Endothelial cell of umbilical vein (primary cell): ENCODE measurements at regions of chr13 and their contacts with region 1.

Region 1: DNA sequence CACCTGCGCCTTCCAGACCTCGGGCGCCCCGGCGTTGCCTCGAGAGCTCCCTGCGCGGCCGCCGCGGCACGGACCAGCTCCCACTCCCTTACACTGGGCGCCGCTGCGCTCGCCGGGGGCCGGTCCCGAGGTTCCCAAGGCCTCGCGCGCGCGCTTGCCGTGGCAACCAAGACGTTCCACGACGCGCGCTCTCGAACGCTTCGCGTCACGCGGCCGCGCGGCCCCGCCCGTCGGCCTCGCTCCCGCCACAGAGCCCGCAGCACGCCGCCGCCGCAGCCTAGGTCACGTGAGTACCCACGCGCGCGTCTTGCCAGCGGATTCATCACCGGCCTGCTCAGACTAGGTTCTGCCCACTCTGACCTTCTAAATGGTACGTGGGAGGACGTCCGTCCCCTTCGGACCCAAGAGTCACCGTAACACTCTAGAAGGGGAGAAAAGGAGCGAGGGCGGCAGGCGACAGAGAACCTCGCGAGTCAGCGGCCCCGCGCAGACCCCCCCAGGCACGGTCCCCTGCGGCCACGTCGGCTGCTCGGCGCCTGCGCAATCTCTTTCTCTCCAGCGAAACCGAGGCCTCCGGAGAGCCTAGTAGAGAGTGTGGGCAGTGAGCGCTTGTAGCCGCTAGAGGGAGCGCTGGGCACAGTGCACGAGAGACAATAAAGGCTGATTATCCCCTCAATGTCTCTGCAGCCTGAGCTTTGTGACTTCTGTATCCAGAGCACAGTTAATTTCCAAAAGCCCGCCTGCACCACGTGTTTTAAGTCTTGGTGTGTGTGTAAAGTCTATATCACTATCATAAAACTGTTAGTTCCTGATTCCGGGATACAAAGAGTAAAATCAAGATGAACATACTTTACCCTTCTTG is at the start of gene SPART:
- DNase-seq: peak; percentile 93
- H3K4me3 ChIP-seq: peak within 1 kb of the TSS; percentile 59 to 89 (median 85)
- H3K27ac ChIP-seq: peak within 1 kb of the TSS; percentile 85
- H3K4me1 ChIP-seq: peaks cover 14% of the 10 kb centered on the region
- H3K27me3 ChIP-seq: no peaks in the 10 kb centered on the region
- CTCF ChIP-seq: peak; percentile 97 to 99
- POLR2A ChIP-seq: no peak
- total RNA-seq, gene SPART: 73.6 and 74.1 TPM in 2 replicates

Region 2: GRCh38 chr13:36148446-36148845 is 198.0 kb before region 1 on chr13:
- CTCF ChIA-PET with region 1: no interaction called
- POLR2A ChIA-PET with region 1: no interaction called
- dilution Hi-C with region 1: no loop called
- intact Hi-C with region 1: loop called (anchors 5 kb)
- DNase-seq: no peak
- H3K4me3 ChIP-seq: no peak overlapping the region
- H3K27ac ChIP-seq: no peak overlapping the region
- H3K4me1 ChIP-seq: peaks cover 5% of the 10 kb centered on the region
- H3K27me3 ChIP-seq: peaks cover 0 to 2% of the 10 kb centered on the region in 2 experiments
- CTCF ChIP-seq: no peak
- POLR2A ChIP-seq: no peak

Region 3: GRCh38 chr13:36332986-36333385 is 13.5 kb before region 1 on chr13:
- CTCF ChIA-PET with region 1: interaction called, 13 read pairs
- POLR2A ChIA-PET with region 1: no interaction called
- dilution Hi-C with region 1: no loop called
- intact Hi-C with region 1: no loop called
- DNase-seq: peak; percentile 65
- H3K4me3 ChIP-seq: no peak overlapping the region
- H3K27ac ChIP-seq: peak overlapping the region; percentile 79
- H3K4me1 ChIP-seq: peaks cover 13% of the 10 kb centered on the region
- H3K27me3 ChIP-seq: no peaks in the 10 kb centered on the region
- CTCF ChIP-seq: no peak
- POLR2A ChIP-seq: no peak

Region 4: GRCh38 chr13:36420437-36420891 is 74.0 kb after region 1 on chr13:
- CTCF ChIA-PET with region 1: interaction called, 19 read pairs
- POLR2A ChIA-PET with region 1: no interaction called
- dilution Hi-C with region 1: no loop called
- intact Hi-C with region 1: loop called (anchors 1 kb)
- DNase-seq: peak; percentile 84
- H3K4me3 ChIP-seq: no peak overlapping the region
- H3K27ac ChIP-seq: no peak overlapping the region
- H3K4me1 ChIP-seq: peaks cover 32% of the 10 kb centered on the region
- H3K27me3 ChIP-seq: no peaks in the 10 kb centered on the region
- CTCF ChIP-seq: peak; percentile 86 to 91
- POLR2A ChIP-seq: no peak

Region 5: DNA sequence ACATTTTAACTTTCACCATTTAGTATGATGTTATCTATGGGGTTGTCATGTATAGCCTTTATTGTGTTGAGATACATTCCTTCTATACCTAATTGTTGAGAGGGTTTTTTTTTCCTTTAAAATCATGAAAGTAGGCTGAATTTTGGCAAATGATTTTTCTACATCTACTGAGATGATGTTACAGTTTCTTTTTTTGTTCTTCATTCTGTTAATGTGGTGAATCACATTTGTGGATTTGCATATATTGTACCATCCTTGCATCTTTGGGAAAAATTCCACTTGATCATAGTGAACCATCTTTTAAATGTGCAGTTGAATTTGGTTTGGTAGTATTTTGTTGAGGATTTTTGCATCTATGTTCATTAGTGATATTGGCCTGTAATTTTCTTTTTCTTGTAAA is 115.1 kb after region 1 on chr13:
- CTCF ChIA-PET with region 1: no interaction called
- POLR2A ChIA-PET with region 1: no interaction called
- dilution Hi-C with region 1: no loop called
- intact Hi-C with region 1: no loop called
- DNase-seq: no peak
- H3K4me3 ChIP-seq: no peak overlapping the region
- H3K27ac ChIP-seq: no peak overlapping the region
- H3K4me1 ChIP-seq: no peaks in the 10 kb centered on the region
- H3K27me3 ChIP-seq: peaks cover under 1 to 2% of the 10 kb centered on the region in 2 experiments
- CTCF ChIP-seq: no peak
- POLR2A ChIP-seq: no peak

Region 6: GRCh38 chr13:36818804-36819738 is 472.6 kb after region 1 on chr13 and contains the start of gene RFXAP:
- CTCF ChIA-PET with region 1: interaction called, 3 read pairs
- POLR2A ChIA-PET with region 1: no interaction called
- dilution Hi-C with region 1: no loop called
- intact Hi-C with region 1: loop called (anchors 2 kb)
- DNase-seq: peak; percentile 88
- H3K4me3 ChIP-seq: peak within 1 kb of the TSS; percentile 62 to 93 (median 83)
- H3K27ac ChIP-seq: peak within 1 kb of the TSS; percentile 44
- H3K4me1 ChIP-seq: peaks cover 35% of the 10 kb centered on the region
- H3K27me3 ChIP-seq: no peaks in the 10 kb centered on the region
- CTCF ChIP-seq: peak in 1 of 2 donors; percentile 17
- POLR2A ChIP-seq: peak; percentile 48
- total RNA-seq, gene RFXAP: 7.2 and 9.0 TPM in 2 replicates

Region 7: GRCh38 chr13:37058910-37059847 is 712.7 kb after region 1 on chr13 and contains the start of gene SUPT20H:
- CTCF ChIA-PET with region 1: no interaction called
- POLR2A ChIA-PET with region 1: no interaction called
- dilution Hi-C with region 1: no loop called
- intact Hi-C with region 1: loop called (anchors 5 kb)
- DNase-seq: peak; percentile 93
- H3K4me3 ChIP-seq: peak within 1 kb of the TSS; percentile 81 to 82 (median 81)
- H3K27ac ChIP-seq: peak within 1 kb of the TSS; percentile 92
- H3K4me1 ChIP-seq: peaks cover 6% of the 10 kb centered on the region
- H3K27me3 ChIP-seq: no peaks in the 10 kb centered on the region
- CTCF ChIP-seq: no peak
- POLR2A ChIP-seq: peak; percentile 73
- total RNA-seq, gene SUPT20H: 65.9 and 70.7 TPM in 2 replicates